ENCODE measurements at regions of chr5 and their contacts with region 1.

Region 1: GRCh38 chr5:150449517-150450339 is at the start of gene RPS14:
- DNase-seq: peak; percentile 87 to 97
- H3K4me3 ChIP-seq: peak within 1 kb of the TSS; percentile 99
- H3K4me1 ChIP-seq: no peaks in the 10 kb centered on the region
- H3K27me3 ChIP-seq: no peaks in the 10 kb centered on the region

Region 2: GRCh38 chr5:150017226-150018005 is 432.3 kb before region 1 on chr5:
- in situ Hi-C with region 1: no loop called
- DNase-seq: peak in 1 of 2 experiments; percentile 11
- H3K4me3 ChIP-seq: no peak overlapping the region
- H3K4me1 ChIP-seq: peaks cover 3% of the 10 kb centered on the region; the same call in 1 of the 2 replicates
- H3K27me3 ChIP-seq: no peaks in the 10 kb centered on the region

Region 3: GRCh38 chr5:150656191-150657132 is 206.7 kb after region 1 on chr5:
- in situ Hi-C with region 1: loop called (anchors 25 kb)
- DNase-seq: peak; percentile 78 to 88
- H3K4me3 ChIP-seq: peak overlapping the region; percentile 48
- H3K4me1 ChIP-seq: peaks cover 5% of the 10 kb centered on the region
- H3K27me3 ChIP-seq: no peaks in the 10 kb centered on the region

Region 4: GRCh38 chr5:150846654-150847333 is 397.1 kb after region 1 on chr5:
- in situ Hi-C with region 1: loop called (anchors 10 kb)
- DNase-seq: peak; percentile 68 to 77
- H3K4me3 ChIP-seq: no peak overlapping the region
- H3K4me1 ChIP-seq: 0 out of 2 replicates have a peak, but pooled peaks cover 3% of the 10 kb centered on the region
- H3K27me3 ChIP-seq: peaks cover 7% of the 10 kb centered on the region

Region 5: DNA sequence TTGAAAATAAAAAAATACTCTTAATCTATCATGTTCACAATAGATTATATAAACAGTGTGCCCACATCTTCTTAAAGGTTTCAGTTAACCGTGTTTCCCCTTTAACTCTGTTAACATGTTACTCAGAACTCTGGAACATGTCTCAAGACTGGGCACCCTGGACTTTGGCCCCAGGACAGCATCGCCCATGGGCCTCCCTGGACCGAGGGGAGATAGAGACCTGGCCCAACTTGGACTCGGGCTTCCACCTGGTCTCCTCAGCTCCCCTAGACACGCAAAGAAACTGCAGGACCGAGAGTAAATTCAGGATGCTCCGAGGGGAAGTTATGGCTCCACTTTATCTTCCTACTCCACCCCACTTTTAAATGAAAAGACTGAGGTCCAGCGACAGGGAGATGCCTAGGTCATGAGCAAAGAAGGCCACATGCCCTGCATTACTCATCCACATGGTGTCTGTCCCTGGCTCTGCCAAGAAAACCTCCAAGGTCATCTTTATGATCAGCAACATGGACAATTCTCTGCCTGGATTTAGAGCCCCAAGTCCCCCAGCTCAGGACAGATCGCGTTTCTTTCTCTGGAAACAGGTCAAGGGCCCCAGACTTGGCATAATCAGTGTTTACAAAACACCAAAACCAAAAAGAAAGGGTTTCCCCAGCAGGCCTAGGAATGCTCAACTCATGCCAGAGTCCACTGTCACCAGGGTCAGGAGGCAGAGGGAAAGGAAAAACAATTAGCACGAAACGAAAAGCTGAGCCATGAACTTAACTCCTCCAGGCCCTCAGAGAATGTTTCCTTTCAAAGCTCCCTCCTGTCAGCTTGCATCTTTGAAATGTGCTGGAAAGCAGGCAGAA is 588.1 kb after region 1 on chr5:
- in situ Hi-C with region 1: no loop called
- DNase-seq: no peak
- H3K4me3 ChIP-seq: no peak overlapping the region
- H3K4me1 ChIP-seq: peaks cover 7% of the 10 kb centered on the region
- H3K27me3 ChIP-seq: no peaks in the 10 kb centered on the region

Region 6: GRCh38 chr5:151080623-151081430 is 631.1 kb after region 1 on chr5 and contains the start of gene TNIP1:
- in situ Hi-C with region 1: loop called (anchors 25 kb)
- DNase-seq: peak; percentile 73 to 92
- H3K4me3 ChIP-seq: peak within 1 kb of the TSS; percentile 95
- H3K4me1 ChIP-seq: peaks cover 11% of the 10 kb centered on the region
- H3K27me3 ChIP-seq: no peaks in the 10 kb centered on the region

Measured in HAP-1 (cell line).